ENCODE measurements at regions of chr2 and their contacts with region 1.

Region 1: GRCh38 chr2:28958689-28959088 is 22.4 kb upstream of the TOGARAM2 start:
- DNase-seq: peak; percentile 20
- H3K4me3 ChIP-seq: no peak overlapping the region
- H3K27me3 ChIP-seq: no peaks in the 10 kb centered on the region
- CTCF ChIP-seq: peak; percentile 57

Region 2: GRCh38 chr2:28754321-28754720 is 204.4 kb before region 1 on chr2:
- CTCF ChIA-PET with region 1: no interaction called
- POLR2A ChIA-PET with region 1: no interaction called
- DNase-seq: no peak
- H3K4me3 ChIP-seq: peak overlapping the region; percentile 99
- H3K27me3 ChIP-seq: no peaks in the 10 kb centered on the region
- CTCF ChIP-seq: no peak

Region 3: GRCh38 chr2:28970469-28971160 is 11.9 kb after region 1 on chr2:
- CTCF ChIA-PET with region 1: interaction called, 16 read pairs
- POLR2A ChIA-PET with region 1: no interaction called
- DNase-seq: no peak
- H3K4me3 ChIP-seq: no peak overlapping the region
- H3K27me3 ChIP-seq: peaks cover 2% of the 10 kb centered on the region; the same call in 1 of the 2 replicates
- CTCF ChIP-seq: no peak

Region 4: GRCh38 chr2:28981016-28981441 is 22.3 kb after region 1 on chr2 and contains the start of gene TOGARAM2:
- CTCF ChIA-PET with region 1: no interaction called
- POLR2A ChIA-PET with region 1: no interaction called
- DNase-seq: no peak
- H3K4me3 ChIP-seq: no peak within 1 kb of the TSS
- H3K27me3 ChIP-seq: peaks cover 2% of the 10 kb centered on the region
- CTCF ChIP-seq: no peak
- polyA plus RNA-seq, gene TOGARAM2: 0.09 and 0.29 TPM in 2 replicates

Region 5: GRCh38 chr2:29206941-29207340 is 248.3 kb after region 1 on chr2:
- CTCF ChIA-PET with region 1: interaction called, 12 read pairs
- POLR2A ChIA-PET with region 1: interaction called, 5 read pairs
- DNase-seq: no peak
- H3K4me3 ChIP-seq: no peak overlapping the region
- H3K27me3 ChIP-seq: no peaks in the 10 kb centered on the region
- CTCF ChIP-seq: no peak

Measured in BJ (cell line).